Breast epithelium (tissue), 4 donors: ENCODE measurements at regions of chr5 and their contacts with region 1.

Region 1: DNA sequence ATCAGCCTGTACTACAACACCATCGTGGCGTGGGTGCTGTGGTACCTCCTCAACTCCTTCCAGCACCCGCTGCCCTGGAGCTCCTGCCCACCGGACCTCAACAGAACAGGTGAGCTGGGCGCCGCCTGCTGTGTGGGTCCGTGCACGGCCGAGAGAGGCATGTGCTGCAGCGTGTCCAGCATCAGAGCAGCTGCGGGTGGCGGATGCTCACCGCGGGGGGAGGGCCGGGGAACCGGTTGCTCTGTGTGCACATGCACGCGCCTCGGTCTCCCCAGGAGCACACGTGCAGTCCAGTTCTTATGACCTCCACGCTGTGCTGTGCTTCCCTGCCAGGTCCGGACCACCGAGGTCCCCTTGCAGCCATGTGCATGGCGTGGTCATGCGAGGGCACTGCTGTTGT is 7.6 kb downstream of the SLC6A18 start:
- DNase-seq: no peak
- H3K4me3 ChIP-seq: no peak overlapping the region
- H3K27ac ChIP-seq: no peak overlapping the region
- H3K4me1 ChIP-seq: no peaks in the 10 kb centered on the region
- H3K27me3 ChIP-seq: peaks cover 0 to 50% of the 10 kb centered on the region in 2 donors
- CTCF ChIP-seq: no peak
- POLR2A ChIP-seq: no peak

Region 2: GRCh38 chr5:1220831-1221230 is 11.9 kb before region 1 on chr5:
- intact Hi-C with region 1: loop called (anchors 1 kb)
- DNase-seq: no peak
- H3K4me3 ChIP-seq: no peak overlapping the region
- H3K27ac ChIP-seq: no peak overlapping the region
- H3K4me1 ChIP-seq: no peaks in the 10 kb centered on the region
- H3K27me3 ChIP-seq: peaks cover 0 to 41% of the 10 kb centered on the region in 2 donors
- CTCF ChIP-seq: no peak
- POLR2A ChIP-seq: no peak

Region 3: DNA sequence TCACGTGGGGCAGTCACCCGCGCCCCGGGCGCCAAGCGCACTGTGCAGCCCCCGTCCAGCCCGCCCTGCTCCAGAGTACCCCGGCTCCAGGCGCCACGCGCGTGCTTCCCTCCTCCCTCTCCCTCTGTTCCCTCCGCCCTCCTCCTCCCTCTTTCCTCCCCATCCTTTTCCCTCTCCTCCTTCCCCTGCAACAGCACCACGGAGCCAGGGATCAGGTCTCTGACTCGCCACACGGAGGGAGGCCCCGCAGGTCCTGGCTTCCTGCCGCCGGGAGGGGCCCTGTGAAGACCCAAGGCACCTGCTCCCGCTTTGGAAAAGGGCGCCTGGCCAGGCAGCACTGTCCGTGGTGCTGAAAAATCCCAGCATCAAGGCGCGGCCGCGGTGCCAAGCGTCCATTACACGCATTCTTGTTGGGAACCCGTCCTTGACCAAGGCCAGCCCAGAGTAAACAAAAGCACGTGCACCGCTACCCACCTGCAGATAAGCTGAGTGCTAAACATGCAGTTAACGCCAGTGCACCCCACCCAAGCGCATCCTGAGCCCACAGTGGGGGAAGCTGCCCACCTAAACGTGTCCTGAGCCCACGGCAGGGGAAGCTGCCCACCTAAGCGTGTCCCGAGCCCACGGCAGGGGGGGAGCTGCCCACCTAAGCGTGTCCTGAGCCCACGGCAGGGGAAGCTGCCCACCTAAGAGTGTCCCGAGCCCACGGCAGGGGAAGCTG is 14.1 kb after region 1 on chr5:
- intact Hi-C with region 1: loop called (anchors 1 kb)
- DNase-seq: no peak
- H3K4me3 ChIP-seq: no peak overlapping the region
- H3K27ac ChIP-seq: no peak overlapping the region
- H3K4me1 ChIP-seq: no peaks in the 10 kb centered on the region
- H3K27me3 ChIP-seq: peaks cover 4 to 79% of the 10 kb centered on the region in 2 donors
- CTCF ChIP-seq: no peak
- POLR2A ChIP-seq: no peak

Region 4: DNA sequence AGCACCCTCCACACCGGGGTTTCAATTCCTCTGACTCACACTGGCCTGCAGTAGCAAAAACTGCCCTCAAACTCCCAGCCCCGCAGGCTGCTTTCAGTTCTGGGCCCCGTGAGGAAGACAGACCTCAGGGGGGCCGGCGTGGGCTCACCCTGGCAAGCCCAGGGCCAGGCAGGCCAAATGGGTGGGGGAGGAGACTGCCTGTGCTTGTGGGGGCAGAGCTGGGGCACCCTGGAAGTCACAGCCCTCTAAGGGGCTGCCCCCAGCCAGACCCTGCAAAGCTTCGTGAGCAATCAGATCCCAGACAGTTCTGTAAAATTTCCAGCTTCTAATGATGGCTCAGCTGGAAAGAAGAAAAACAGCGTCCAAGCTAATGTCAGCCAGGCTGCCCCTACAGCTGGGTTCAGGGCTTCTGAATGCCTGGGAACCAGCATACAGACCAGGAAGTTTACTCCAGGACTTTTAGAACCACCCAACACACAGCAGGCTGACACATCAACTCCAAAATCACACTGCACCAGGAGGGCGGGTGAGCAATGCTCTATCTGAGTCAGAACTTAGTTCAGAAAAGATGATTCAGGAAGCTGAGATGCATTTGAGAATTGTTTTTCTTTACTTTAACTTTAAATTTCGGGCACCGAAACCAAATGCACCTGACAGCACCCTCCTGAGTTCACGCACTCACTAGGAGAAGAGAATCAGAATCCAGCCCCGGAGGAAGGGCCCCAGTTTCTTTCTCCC is 256.3 kb after region 1 on chr5:
- intact Hi-C with region 1: no loop called
- DNase-seq: no peak
- H3K4me3 ChIP-seq: no peak overlapping the region
- H3K27ac ChIP-seq: no peak overlapping the region
- H3K4me1 ChIP-seq: no peaks in the 10 kb centered on the region
- H3K27me3 ChIP-seq: no peaks in the 10 kb centered on the region
- CTCF ChIP-seq: no peak
- POLR2A ChIP-seq: no peak